Right cardiac atrium (tissue), 5 donors: ENCODE measurements at regions of chr7 and their contacts with region 1.

Region 1: GRCh38 chr7:149005241-149006050 is 22.9 kb downstream of the PDIA4 start:
- DNase-seq: peak; percentile 87 to 96 (median 93)
- ATAC-seq: peak; percentile 84 to 86
- H3K4me3 ChIP-seq: no peak overlapping the region
- H3K27ac ChIP-seq: no peak overlapping the region
- H3K4me1 ChIP-seq: no peaks in the 10 kb centered on the region
- H3K27me3 ChIP-seq: no peaks in the 10 kb centered on the region

Region 2: DNA sequence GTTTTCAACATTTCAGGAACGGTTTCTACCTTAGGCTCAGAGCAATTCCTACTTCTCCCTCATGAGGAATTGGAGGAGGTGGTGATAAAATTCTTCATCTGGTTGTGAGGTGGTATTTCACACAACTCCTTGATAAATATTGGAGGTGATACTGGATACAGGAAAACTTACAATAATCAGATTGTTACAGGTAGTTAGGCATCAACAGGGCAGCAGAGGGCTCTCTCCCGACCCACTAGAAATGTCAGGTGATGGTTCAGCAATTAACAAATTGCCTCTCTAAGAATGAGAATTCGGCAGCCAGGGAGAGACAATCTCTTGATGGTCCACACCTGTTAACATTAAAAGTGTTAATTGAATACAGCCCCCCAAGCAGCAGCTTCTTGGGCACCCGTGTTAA is 62.4 kb after region 1 on chr7:
- intact Hi-C with region 1: loop called in 3 of 4 experiments (anchors 2 to 10 kb)
- DNase-seq: no peak
- ATAC-seq: no peak
- H3K4me3 ChIP-seq: no peak overlapping the region
- H3K27ac ChIP-seq: no peak overlapping the region
- H3K4me1 ChIP-seq: no peaks in the 10 kb centered on the region
- H3K27me3 ChIP-seq: no peaks in the 10 kb centered on the region

Region 3: DNA sequence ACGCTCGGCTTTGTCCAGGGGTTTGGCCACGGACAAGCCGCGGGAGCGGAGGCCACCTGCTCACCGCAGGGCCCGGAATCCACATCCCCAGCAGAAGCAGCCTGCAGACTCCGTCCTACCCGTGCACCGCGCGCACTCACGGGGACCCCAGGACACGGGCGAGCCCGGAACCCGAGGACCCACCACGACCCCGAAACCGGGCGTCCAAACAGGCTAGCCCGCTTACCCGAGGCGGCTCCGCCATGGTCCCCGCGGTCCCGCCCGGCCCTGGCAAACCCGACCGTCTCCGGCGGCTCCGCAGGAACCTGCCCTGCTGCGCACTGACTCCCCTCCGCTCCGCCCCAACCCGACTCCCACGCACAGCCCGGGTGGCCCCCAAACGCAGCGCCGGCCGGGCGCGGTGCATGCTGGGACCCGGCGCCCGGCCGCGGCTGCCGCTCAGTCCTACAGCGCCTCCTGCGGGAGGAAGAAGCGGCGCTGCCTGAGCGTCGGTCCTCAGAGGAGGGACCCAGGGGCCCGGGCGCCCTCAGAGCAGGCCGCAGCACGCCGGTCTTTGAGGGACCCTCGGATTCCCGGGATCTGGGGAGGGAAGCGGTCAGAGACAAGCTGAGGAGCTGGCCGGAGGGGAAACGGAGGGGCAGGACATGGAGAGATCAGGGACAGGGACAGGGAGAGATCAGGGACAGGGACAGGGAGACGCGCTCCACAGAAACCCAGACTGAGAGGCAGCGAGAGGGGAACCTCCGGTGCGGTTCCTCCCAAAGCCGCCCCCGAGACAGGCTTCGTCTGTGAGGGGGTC is 85.2 kb after region 1 on chr7 and contains the start of gene ZNF786:
- intact Hi-C with region 1: loop called in 3 of 4 experiments (anchors 2 to 5 kb)
- DNase-seq: peak; percentile 92 to 96 (median 95)
- ATAC-seq: peak; percentile 97
- H3K4me3 ChIP-seq: peak within 1 kb of the TSS; percentile 82
- H3K27ac ChIP-seq: peak within 1 kb of the TSS; percentile 89
- H3K4me1 ChIP-seq: no peaks in the 10 kb centered on the region
- H3K27me3 ChIP-seq: no peaks in the 10 kb centered on the region
- total RNA-seq, gene ZNF786: 2.5 to 4.1 (median 3.3) TPM

Region 4: GRCh38 chr7:149154030-149154429 is 148.6 kb after region 1 on chr7:
- intact Hi-C with region 1: no loop called
- DNase-seq: no peak
- ATAC-seq: no peak
- H3K4me3 ChIP-seq: no peak overlapping the region
- H3K27ac ChIP-seq: no peak overlapping the region
- H3K4me1 ChIP-seq: no peaks in the 10 kb centered on the region
- H3K27me3 ChIP-seq: no peaks in the 10 kb centered on the region